ENCODE measurements at regions of chr19 and their contacts with region 1.

Region 1: DNA sequence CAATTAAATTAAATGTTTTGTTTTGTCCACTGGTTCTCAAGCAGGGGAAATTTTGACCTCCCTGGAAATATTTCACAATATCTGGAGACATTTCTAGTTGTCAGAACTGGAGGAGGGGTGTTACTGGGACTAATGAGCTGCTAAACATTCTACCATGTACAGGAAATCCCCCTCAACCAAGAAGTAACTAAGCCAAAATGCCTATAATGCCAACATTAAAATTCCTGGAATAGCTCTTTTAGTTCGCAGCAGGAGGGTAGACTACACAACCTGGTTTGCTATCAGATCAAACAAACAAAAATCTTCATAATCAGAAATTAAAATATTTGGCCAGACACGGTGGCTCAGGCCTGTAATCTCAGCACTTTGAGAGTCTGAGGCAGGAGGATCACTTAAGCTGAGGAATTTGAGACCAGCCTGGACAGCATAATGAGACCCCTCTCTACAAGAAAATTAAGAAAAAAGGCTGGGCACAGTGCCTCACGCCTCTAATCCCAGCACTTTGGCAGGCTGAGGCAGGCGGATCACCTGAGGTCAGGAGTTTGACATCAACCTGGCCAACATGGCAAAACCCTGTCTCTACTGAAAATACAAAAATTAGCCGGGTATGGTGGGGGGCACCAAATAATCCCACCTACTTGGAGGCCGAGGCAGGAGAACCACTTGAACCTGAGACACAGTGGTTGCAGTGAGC is 13.7 kb upstream of the SMARCA4 start:
- DNase-seq: no peak
- ATAC-seq: no peak
- H3K4me3 ChIP-seq: no peak overlapping the region
- H3K4me3 Mint-ChIP-seq: no peak overlapping the region
- H3K27ac ChIP-seq: no peak overlapping the region
- H3K27ac Mint-ChIP-seq: no peak overlapping the region
- H3K4me1 ChIP-seq: no peaks in the 10 kb centered on the region
- H3K4me1 Mint-ChIP-seq: peaks cover 0 to 6% (median 2%) of the 10 kb centered on the region in 7 donors
- H3K27me3 ChIP-seq: no peaks in the 10 kb centered on the region
- H3K27me3 Mint-ChIP-seq: no peaks in the 10 kb centered on the region

Region 2: GRCh38 chr19:10928525-10929401 is 18.3 kb before region 1 on chr19 and contains the starts of genes TIMM29 and YIPF2:
- CTCF ChIA-PET with region 1: interaction called, 3 read pairs
- POLR2A ChIA-PET with region 1: interaction called, 3 read pairs
- intact Hi-C with region 1: loop called in 1 of 2 experiments (anchors 2 kb)
- DNase-seq: peak; percentile 76 to 92 (median 88)
- ATAC-seq: peak; percentile 91
- H3K4me3 ChIP-seq: peak within 1 kb of the TSS; percentile 89
- H3K4me3 Mint-ChIP-seq: peak within 1 kb of the TSS; percentile 84 to 96 (median 92)
- H3K27ac ChIP-seq: peak within 1 kb of the TSS; percentile 77
- H3K27ac Mint-ChIP-seq: peak within 1 kb of the TSS; percentile 66 to 93 (median 90)
- H3K4me1 ChIP-seq: peaks cover 14 to 16% of the 10 kb centered on the region in 2 donors
- H3K4me1 Mint-ChIP-seq: peaks cover 12 to 33% (median 26%) of the 10 kb centered on the region in 7 donors
- H3K27me3 ChIP-seq: no peaks in the 10 kb centered on the region
- H3K27me3 Mint-ChIP-seq: no peaks in the 10 kb centered on the region
- total RNA-seq, gene TIMM29: 15.8 to 33.4 (median 24.7) TPM
- total RNA-seq, gene YIPF2: 20.5 to 27.9 (median 26.2) TPM

Region 3: DNA sequence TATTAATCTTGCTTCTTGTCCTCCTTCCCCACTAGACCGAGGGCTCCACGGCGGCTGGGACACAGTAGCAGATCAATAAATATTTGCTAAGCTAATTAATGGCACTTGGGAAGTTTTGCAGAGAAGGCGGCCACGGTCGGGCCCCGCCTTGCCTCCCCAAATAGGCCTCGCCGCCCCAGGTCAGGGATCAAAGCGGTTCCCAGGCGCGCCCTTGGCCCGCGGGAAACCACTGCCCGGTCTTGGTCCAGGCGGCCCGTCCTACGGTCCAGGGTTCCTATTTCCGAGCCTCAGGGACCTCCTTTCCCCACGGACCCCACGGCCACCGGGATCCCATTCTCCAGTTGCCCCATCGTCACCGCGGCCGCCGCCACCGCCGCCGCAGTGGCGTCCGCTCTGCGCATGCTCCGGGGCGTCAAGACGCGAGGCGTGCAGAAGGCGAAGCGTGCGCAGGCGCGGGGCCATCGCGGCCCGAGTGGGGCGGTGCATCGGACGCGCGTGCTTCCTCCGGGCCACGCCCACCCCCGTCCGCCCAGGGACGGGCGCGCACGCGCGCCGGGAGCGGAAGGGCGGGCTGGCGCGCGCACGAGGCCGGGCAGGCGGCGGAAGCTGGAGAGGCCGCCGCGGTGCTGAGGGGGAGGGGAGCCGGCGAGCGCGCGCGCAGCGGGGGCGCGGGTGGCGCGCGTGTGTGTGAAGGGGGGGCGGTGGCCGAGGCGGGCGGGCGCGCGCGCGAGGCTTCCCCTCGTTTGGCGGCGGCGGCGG is 13.4 kb after region 1 on chr19 and contains the start of gene SMARCA4:
- CTCF ChIA-PET with region 1: interaction called, 7 read pairs
- POLR2A ChIA-PET with region 1: no interaction called
- intact Hi-C with region 1: loop called (anchors 1 to 2 kb)
- DNase-seq: peak; percentile 96 to 100 (median 99)
- ATAC-seq: peak; percentile 96
- H3K4me3 ChIP-seq: peak within 1 kb of the TSS; percentile 89
- H3K4me3 Mint-ChIP-seq: peak within 1 kb of the TSS; percentile 84 to 94 (median 90)
- H3K27ac ChIP-seq: peak within 1 kb of the TSS; percentile 89
- H3K27ac Mint-ChIP-seq: peak within 1 kb of the TSS; percentile 79 to 94 (median 93)
- H3K4me1 ChIP-seq: peaks cover 28 to 33% of the 10 kb centered on the region in 2 donors
- H3K4me1 Mint-ChIP-seq: peaks cover 22 to 42% (median 34%) of the 10 kb centered on the region in 7 donors
- H3K27me3 ChIP-seq: no peaks in the 10 kb centered on the region
- H3K27me3 Mint-ChIP-seq: no peaks in the 10 kb centered on the region
- total RNA-seq, gene SMARCA4: 96.0 to 126 (median 104) TPM

Region 4: GRCh38 chr19:10979951-10980381 is 32.9 kb after region 1 on chr19:
- CTCF ChIA-PET with region 1: no interaction called
- POLR2A ChIA-PET with region 1: no interaction called
- intact Hi-C with region 1: loop called in 1 of 2 experiments (anchors 1 kb)
- DNase-seq: peak in 4 of 9 donors; percentile 10 to 37 (median 24)
- ATAC-seq: peak; percentile 85
- H3K4me3 ChIP-seq: no peak overlapping the region
- H3K4me3 Mint-ChIP-seq: peak overlapping the region in 9 of 10 donors; percentile 22 to 76 (median 35)
- H3K27ac ChIP-seq: no peak overlapping the region
- H3K27ac Mint-ChIP-seq: peak overlapping the region in 6 of 9 donors; percentile 46 to 78 (median 57)
- H3K4me1 ChIP-seq: peaks cover 0 to 4% of the 10 kb centered on the region in 2 donors
- H3K4me1 Mint-ChIP-seq: peaks cover 6 to 39% (median 25%) of the 10 kb centered on the region in 7 donors
- H3K27me3 ChIP-seq: no peaks in the 10 kb centered on the region
- H3K27me3 Mint-ChIP-seq: no peaks in the 10 kb centered on the region

Region 5: GRCh38 chr19:11011668-11012067 is 64.6 kb after region 1 on chr19:
- CTCF ChIA-PET with region 1: interaction called, 3 read pairs
- POLR2A ChIA-PET with region 1: no interaction called
- intact Hi-C with region 1: loop called in 1 of 2 experiments (anchors 2 kb)
- DNase-seq: no peak
- ATAC-seq: no peak
- H3K4me3 ChIP-seq: no peak overlapping the region
- H3K4me3 Mint-ChIP-seq: no peak overlapping the region
- H3K27ac ChIP-seq: no peak overlapping the region
- H3K27ac Mint-ChIP-seq: no peak overlapping the region
- H3K4me1 ChIP-seq: no peaks in the 10 kb centered on the region
- H3K4me1 Mint-ChIP-seq: peaks cover 0 to 1% (median 0%) of the 10 kb centered on the region in 7 donors
- H3K27me3 ChIP-seq: no peaks in the 10 kb centered on the region
- H3K27me3 Mint-ChIP-seq: no peaks in the 10 kb centered on the region

Region 6: DNA sequence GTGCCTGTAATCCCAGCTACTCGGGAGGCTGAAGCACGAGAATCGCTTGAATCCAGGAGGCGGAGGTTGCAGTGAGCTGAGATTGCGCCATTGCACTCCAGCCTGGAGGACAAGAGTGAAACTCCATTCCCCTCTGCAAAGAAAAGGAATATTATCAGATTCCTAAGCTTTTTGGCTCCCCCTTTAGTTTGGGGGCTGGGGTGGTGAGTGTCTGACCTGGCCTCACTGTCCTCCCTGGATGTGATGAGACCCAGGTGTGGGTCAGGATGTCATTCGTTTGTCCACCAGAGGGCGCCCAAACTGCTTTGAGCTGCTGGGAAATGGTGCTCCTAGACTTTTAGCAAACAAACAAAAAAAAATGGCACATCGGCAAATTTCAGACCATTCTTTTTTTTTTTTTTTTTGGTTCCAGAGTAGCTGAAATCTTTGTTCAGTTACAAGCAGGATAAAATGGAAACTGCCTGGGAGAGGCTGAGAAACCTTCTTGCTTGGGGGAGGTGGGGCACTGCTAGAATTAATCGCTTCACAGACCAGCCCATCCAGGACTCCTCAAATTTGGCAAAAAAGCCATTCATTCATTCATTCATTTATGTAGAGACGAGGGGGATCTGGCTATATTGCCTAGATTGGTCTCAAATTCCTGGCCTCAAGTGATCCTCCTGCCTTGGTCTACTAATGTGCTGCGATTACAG is 179.0 kb after region 1 on chr19:
- CTCF ChIA-PET with region 1: no interaction called
- POLR2A ChIA-PET with region 1: no interaction called
- intact Hi-C with region 1: loop called in 1 of 2 experiments (anchors 1 kb)
- DNase-seq: peak; percentile 33 to 73 (median 62)
- ATAC-seq: peak; percentile 77
- H3K4me3 ChIP-seq: no peak overlapping the region
- H3K4me3 Mint-ChIP-seq: no peak overlapping the region
- H3K27ac ChIP-seq: no peak overlapping the region
- H3K27ac Mint-ChIP-seq: peak overlapping the region in 3 of 9 donors; percentile 23 to 72 (median 48)
- H3K4me1 ChIP-seq: no peaks in the 10 kb centered on the region
- H3K4me1 Mint-ChIP-seq: peaks cover 0 to 9% (median 5%) of the 10 kb centered on the region in 7 donors
- H3K27me3 ChIP-seq: no peaks in the 10 kb centered on the region
- H3K27me3 Mint-ChIP-seq: no peaks in the 10 kb centered on the region